PC-3 (cell line): ENCODE measurements at regions of chr2 and their contacts with region 1.

Region 1: DNA sequence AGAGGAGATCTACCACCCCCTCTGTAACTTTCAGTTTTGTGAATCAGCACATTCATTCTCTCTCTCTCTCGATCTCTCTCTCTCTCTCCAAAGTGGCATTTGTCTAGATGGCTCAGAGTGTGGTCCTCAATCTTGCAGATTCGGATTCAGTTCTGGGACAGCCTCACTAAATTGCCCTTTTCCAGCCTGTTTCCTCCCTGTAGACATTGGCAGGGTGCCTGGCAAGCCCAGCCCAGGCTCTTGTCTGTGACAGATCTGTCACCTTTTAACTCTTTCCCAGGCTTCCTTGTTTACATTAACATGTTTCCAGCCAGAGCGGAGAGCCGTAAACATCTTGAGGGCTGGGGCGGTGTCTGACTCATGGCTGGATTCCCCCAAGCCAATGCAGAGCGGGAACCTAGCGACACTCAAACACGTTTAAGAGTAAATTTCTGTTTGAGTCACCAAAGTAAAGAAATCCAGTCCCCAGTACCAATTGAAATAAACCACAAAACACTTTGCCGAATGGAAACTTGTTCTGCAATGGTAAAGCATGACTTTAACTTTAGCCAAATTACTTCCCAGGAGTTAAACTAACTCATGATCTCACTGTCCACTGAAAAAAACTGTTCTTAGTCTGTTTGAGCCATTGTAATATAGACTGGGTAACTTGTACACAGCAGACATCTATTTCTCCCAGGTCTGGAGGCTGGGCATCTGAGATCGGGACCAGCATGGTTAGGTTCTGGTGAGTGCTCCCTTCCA is 6.6 kb upstream of the CYP27C1 start:
- DNase-seq: peak; percentile 99
- ATAC-seq: peak; percentile 90
- H3K4me3 ChIP-seq: peak overlapping the region; percentile 59
- H3K27ac ChIP-seq: peak overlapping the region; percentile 98
- H3K4me1 ChIP-seq: peaks cover 34% of the 10 kb centered on the region
- H3K27me3 ChIP-seq: no peaks in the 10 kb centered on the region
- CTCF ChIP-seq: no peak

Region 2: DNA sequence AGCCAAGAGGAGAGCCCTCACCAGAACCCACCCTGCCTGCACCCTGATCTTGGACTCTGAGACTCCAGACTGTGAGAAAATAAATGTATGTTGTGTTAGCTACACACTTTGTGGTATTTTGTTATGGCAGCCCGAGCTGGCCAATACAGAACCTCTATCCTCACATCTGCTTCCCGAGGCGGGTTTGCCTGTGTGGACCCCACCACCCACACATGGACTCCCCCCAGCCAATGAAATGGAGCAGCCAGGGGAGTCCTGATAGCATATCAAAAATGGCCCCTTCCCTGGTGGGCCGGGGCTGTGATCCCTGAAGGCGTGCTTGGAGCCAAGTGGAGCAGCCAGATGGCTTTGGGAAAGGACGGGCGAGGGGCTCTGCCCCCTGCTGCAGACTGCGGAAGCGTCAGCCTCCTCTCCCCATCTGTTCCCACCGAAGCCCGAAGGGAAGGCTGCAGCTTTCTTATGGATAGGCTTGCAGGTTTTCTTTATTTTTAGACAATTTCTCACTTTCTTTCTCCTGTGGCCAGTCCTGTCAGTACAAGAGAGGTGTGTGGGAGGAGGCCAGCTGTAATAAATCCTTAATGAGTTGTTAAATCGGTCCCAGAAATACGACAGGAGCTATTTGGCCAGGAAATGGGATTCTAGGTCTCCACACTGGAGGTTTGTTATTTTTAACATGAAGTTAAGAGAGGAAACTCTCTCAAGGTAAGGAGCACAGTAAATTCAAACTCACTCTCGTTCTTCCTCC is 293.6 kb before region 1 on chr2:
- CTCF ChIA-PET with region 1: no interaction called
- POLR2A ChIA-PET with region 1: no interaction called
- intact Hi-C with region 1: no loop called
- DNase-seq: no peak
- ATAC-seq: no peak
- H3K4me3 ChIP-seq: no peak overlapping the region
- H3K27ac ChIP-seq: no peak overlapping the region
- H3K4me1 ChIP-seq: no peaks in the 10 kb centered on the region
- H3K27me3 ChIP-seq: peaks cover 53% of the 10 kb centered on the region
- CTCF ChIP-seq: no peak

Region 3: GRCh38 chr2:127205218-127206125 is 21.2 kb before region 1 on chr2:
- CTCF ChIA-PET with region 1: no interaction called
- POLR2A ChIA-PET with region 1: no interaction called
- intact Hi-C with region 1: no loop called
- DNase-seq: no peak
- ATAC-seq: no peak
- H3K4me3 ChIP-seq: no peak overlapping the region
- H3K27ac ChIP-seq: no peak overlapping the region
- H3K4me1 ChIP-seq: no peaks in the 10 kb centered on the region; the same call in 1 of the 2 replicates
- H3K27me3 ChIP-seq: no peaks in the 10 kb centered on the region
- CTCF ChIP-seq: no peak

Region 4: GRCh38 chr2:127239395-127239794 is 12.7 kb after region 1 on chr2:
- CTCF ChIA-PET with region 1: no interaction called
- POLR2A ChIA-PET with region 1: no interaction called
- intact Hi-C with region 1: loop called (anchors 2 kb)
- DNase-seq: no peak
- ATAC-seq: no peak
- H3K4me3 ChIP-seq: no peak overlapping the region
- H3K27ac ChIP-seq: no peak overlapping the region
- H3K4me1 ChIP-seq: no peaks in the 10 kb centered on the region
- H3K27me3 ChIP-seq: no peaks in the 10 kb centered on the region
- CTCF ChIP-seq: no peak

Region 5: GRCh38 chr2:127293748-127294562 is 67.3 kb after region 1 on chr2 and contains the start of gene ERCC3:
- CTCF ChIA-PET with region 1: no interaction called
- POLR2A ChIA-PET with region 1: no interaction called
- intact Hi-C with region 1: loop called (anchors 2 kb)
- DNase-seq: peak; percentile 78
- ATAC-seq: peak; percentile 96
- H3K4me3 ChIP-seq: peak within 1 kb of the TSS; percentile 100
- H3K27ac ChIP-seq: peak within 1 kb of the TSS; percentile 49
- H3K4me1 ChIP-seq: peaks cover 14% of the 10 kb centered on the region
- H3K27me3 ChIP-seq: no peaks in the 10 kb centered on the region
- CTCF ChIP-seq: no peak
- total RNA-seq, gene ERCC3: 39.0 and 44.3 TPM in 2 replicates

Region 6: DNA sequence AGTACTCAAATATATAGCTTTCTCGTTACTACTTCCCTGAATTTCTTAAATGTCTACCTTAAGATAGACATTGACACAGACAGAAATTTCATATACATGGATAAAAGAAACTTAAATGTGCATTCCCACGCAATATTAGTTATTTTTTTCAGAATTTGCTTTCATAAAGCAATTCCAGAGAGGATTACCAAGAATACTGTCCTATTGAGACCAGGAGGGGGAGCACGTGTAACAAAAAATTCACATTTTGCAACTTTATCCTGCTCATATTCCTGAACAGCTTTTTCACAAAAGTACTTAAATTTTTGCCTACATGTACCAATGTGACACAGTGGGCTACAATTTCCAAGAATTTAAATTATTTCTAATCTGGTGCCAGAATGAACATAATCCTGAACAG is 97.9 kb after region 1 on chr2:
- CTCF ChIA-PET with region 1: no interaction called
- POLR2A ChIA-PET with region 1: no interaction called
- intact Hi-C with region 1: loop called (anchors 5 kb)
- DNase-seq: peak; percentile 68
- ATAC-seq: peak; percentile 69
- H3K4me3 ChIP-seq: no peak overlapping the region
- H3K27ac ChIP-seq: no peak overlapping the region
- H3K4me1 ChIP-seq: peaks cover 5% of the 10 kb centered on the region
- H3K27me3 ChIP-seq: no peaks in the 10 kb centered on the region
- CTCF ChIP-seq: peak; percentile 88

Region 7: GRCh38 chr2:127387655-127388422 is 161.1 kb after region 1 on chr2 and contains the start of gene MAP3K2:
- CTCF ChIA-PET with region 1: no interaction called
- POLR2A ChIA-PET with region 1: no interaction called
- intact Hi-C with region 1: loop called (anchors 10 kb)
- DNase-seq: peak; percentile 96
- ATAC-seq: peak; percentile 79
- H3K4me3 ChIP-seq: peak within 1 kb of the TSS; percentile 84
- H3K27ac ChIP-seq: peak within 1 kb of the TSS; percentile 90
- H3K4me1 ChIP-seq: peaks cover 28% of the 10 kb centered on the region
- H3K27me3 ChIP-seq: no peaks in the 10 kb centered on the region
- CTCF ChIP-seq: no peak
- total RNA-seq, gene MAP3K2: 54.6 and 64.7 TPM in 2 replicates